ENCODE measurements at regions of chr3 and their contacts with region 1.

Region 1: DNA sequence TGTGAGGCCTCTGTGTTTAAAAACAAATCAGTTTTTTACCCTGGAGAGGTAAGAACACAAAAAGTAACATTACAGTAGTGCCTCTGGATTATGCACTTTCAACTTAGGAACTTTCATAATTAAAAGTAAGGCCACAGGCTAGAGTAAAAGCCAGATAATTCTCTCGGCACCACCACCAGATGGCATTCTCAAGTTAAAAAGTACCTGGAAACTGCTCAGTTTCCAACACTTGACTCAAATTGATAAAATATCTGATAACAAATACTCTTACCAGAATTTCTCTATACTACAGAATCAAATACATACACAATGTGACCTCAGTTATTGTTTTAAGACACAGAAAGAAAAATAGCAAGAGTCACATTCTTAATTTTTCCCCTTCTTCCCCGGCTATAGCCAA is 19.9 kb downstream of the SPICE1 start:
- DNase-seq: no peak
- H3K4me3 ChIP-seq: no peak overlapping the region
- CTCF ChIP-seq: peak; percentile 29

Region 2: GRCh38 chr3:113468539-113468938 is 26.5 kb before region 1 on chr3:
- CTCF ChIA-PET with region 1: interaction called, 10 read pairs
- POLR2A ChIA-PET with region 1: no interaction called
- DNase-seq: no peak
- H3K4me3 ChIP-seq: no peak overlapping the region
- CTCF ChIP-seq: no peak

Region 3: GRCh38 chr3:113514265-113514769 is 19.3 kb after region 1 on chr3:
- CTCF ChIA-PET with region 1: interaction called, 14 read pairs
- POLR2A ChIA-PET with region 1: no interaction called
- DNase-seq: no peak
- H3K4me3 ChIP-seq: peak overlapping the region; percentile 91
- CTCF ChIP-seq: no peak

Region 4: GRCh38 chr3:113575206-113575605 is 80.2 kb after region 1 on chr3:
- CTCF ChIA-PET with region 1: interaction called, 92 read pairs
- POLR2A ChIA-PET with region 1: no interaction called
- DNase-seq: no peak
- H3K4me3 ChIP-seq: no peak overlapping the region
- CTCF ChIP-seq: no peak

Region 5: DNA sequence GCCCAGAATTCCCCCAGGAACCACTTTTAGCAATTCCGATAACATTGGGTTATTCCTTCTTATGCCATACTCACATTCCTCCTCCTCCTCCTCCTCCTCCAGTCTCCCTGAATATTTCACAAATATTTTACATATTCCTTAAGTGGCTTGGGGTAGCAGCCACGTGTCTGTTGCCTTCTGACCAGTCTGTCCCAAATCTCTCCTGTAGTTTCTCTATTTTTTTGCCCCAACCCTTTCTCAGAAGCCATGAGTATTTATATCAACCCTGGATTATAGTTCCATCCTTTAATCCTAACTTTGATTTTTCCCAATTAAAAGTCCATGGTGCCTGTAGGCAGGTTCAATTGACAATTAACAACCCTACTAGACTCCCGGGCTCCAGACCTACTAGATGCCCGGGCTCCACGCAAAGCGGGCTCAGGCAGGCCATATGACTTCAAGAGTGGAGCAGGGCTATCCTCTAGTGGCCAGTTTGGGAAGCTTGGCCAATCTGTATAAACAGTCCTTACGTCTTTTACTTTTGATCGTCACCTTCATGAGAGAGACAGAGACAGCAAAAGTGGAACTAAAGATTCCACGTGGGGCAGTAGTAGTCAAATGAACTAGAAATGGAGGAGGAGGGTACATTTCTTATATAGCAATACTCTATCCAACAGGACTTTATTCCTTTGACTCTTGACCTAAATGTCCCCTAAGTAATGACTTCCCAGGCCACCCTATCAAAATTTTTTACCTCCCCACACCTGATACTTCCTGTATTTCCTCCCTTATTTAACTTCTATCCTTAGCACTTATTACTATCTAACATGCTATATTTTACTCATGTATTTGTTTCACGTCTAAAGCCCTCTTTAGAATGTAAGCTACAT is 131.7 kb after region 1 on chr3:
- CTCF ChIA-PET with region 1: interaction called, 74 read pairs
- POLR2A ChIA-PET with region 1: no interaction called
- DNase-seq: peak; percentile 3
- H3K4me3 ChIP-seq: no peak overlapping the region; the same call in 1 of the 2 replicates
- CTCF ChIP-seq: peak; percentile 74

Region 6: DNA sequence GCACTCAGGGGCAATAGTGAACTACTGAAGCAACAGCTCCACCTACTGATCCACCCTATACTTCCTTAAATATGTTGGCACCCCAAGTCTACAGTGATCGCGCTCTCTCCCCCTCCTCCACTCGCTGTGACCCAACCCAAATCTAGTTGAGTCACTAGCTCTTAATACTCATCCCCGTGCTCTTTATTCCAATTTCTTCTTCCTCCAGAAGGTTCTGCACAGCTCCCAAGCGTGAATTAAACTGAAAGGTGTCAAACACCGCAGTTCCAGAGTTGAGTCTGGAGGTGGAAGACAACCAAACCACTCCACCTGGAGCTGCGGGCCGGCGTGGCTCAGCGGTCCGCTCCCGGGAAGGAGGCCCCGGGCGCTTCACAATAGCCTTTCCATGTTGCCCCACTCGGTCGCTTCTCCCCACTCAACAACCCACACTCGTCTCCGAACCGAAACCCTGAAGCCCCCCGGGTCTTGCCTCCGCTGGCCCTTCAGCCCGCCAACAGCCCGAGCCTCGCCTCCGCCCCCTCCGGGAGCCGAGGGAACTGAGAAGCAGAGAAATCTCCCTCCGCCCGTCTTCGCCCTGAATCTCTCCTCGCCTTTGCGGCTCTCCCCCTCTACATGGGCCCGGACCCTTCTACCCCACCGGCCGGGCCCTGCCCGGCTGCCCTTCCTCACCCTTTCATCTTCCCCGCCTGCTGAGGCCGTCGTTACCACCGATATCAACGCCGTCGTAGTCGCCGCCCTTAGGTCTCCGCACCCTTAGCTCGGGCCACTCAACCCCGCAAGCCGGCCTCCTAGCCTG is 250.4 kb after region 1 on chr3:
- CTCF ChIA-PET with region 1: interaction called, 10 read pairs
- POLR2A ChIA-PET with region 1: no interaction called
- DNase-seq: peak; percentile 68
- H3K4me3 ChIP-seq: peak overlapping the region; percentile 90
- CTCF ChIP-seq: peak; percentile 73

Region 7: DNA sequence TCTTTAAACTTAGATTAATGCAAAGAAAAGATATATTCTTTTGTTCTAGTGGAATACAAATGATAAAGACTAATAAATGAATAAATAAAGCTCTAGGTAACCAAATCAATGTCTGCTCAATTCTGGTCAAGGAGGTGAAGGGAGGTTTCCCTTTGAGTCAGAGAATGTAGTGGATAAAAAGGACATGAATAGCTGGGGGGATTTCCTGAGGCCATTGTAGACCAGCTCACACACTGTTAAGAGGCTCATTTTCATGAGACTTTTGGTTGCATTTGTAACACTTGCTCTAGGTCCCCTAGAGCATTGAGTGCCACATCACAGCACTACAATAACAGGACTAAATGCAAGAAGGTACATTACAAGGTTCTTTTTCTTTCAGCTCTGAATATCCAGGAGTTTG is 969.5 kb after region 1 on chr3:
- CTCF ChIA-PET with region 1: no interaction called
- POLR2A ChIA-PET with region 1: no interaction called
- DNase-seq: no peak
- H3K4me3 ChIP-seq: no peak overlapping the region
- CTCF ChIP-seq: no peak

Measured in AG04449 (cell line).